B cell (primary cell): ENCODE measurements at regions of chr22 and their contacts with region 1.

Region 1: GRCh38 chr22:40597526-40598430 is 38.7 kb downstream of the MRTFA start:
- DNase-seq: no peak
- ATAC-seq: no peak
- H3K4me3 ChIP-seq: no peak overlapping the region
- H3K4me3 Mint-ChIP-seq: peak overlapping the region; percentile 59
- H3K27ac ChIP-seq: peak overlapping the region in 1 of 2 donors; percentile 34
- H3K27ac Mint-ChIP-seq: no peak overlapping the region
- H3K4me1 ChIP-seq: peaks cover 45 to 48% of the 10 kb centered on the region in 2 donors
- H3K4me1 Mint-ChIP-seq: peaks cover 60% of the 10 kb centered on the region
- H3K27me3 ChIP-seq: no peaks in the 10 kb centered on the region
- H3K27me3 Mint-ChIP-seq: no peaks in the 10 kb centered on the region
- CTCF ChIP-seq: no peak

Region 2: GRCh38 chr22:40533712-40534378 is 63.9 kb before region 1 on chr22:
- CTCF ChIA-PET with region 1: interaction called, 6 read pairs
- POLR2A ChIA-PET with region 1: no interaction called
- intact Hi-C with region 1: loop called (anchors 10 kb)
- DNase-seq: peak; percentile 66
- ATAC-seq: peak; percentile 86
- H3K4me3 ChIP-seq: peak overlapping the region in 3 of 5 experiments; percentile 20 to 25 (median 21)
- H3K4me3 Mint-ChIP-seq: peak overlapping the region; percentile 53
- H3K27ac ChIP-seq: peak overlapping the region in 1 of 2 donors; percentile 72
- H3K27ac Mint-ChIP-seq: peak overlapping the region; percentile 43
- H3K4me1 ChIP-seq: peaks cover 31 to 46% of the 10 kb centered on the region in 2 donors
- H3K4me1 Mint-ChIP-seq: peaks cover 53% of the 10 kb centered on the region
- H3K27me3 ChIP-seq: no peaks in the 10 kb centered on the region
- H3K27me3 Mint-ChIP-seq: no peaks in the 10 kb centered on the region
- CTCF ChIP-seq: no peak

Region 3: DNA sequence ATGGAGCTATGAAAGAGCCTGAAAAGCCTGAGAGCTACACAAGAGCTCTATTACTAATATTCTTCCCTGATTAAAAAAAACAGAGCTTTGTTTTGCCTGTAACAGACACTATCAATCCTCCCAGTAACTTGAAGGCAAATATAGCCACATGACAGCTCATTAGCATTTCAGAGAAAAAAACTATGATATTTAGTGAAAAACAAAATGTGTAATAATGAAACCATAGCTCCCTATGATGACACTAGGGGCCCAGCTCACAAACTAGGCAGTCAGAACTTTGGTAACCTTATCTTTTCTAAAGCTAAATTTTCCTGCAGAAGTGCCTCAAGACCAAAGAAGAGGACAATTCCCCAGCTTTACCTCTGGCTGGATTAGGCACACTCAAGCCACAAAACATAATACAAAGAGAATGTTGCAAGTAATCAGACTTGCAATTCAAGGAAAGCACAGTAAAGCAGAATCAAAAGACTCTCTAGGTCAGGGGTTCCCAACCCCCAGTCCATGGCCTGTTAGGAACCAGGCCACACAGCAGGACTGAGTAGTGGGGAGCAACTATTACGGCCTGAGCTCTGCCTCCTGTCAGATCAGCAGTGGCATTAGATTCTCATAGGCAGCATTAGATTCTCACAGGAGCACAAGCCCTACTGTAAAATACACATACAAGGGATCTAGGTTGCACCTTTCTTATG is 14.6 kb before region 1 on chr22:
- CTCF ChIA-PET with region 1: interaction called, 11 read pairs
- POLR2A ChIA-PET with region 1: no interaction called
- intact Hi-C with region 1: no loop called
- DNase-seq: no peak
- ATAC-seq: no peak
- H3K4me3 ChIP-seq: no peak overlapping the region
- H3K4me3 Mint-ChIP-seq: no peak overlapping the region
- H3K27ac ChIP-seq: no peak overlapping the region
- H3K27ac Mint-ChIP-seq: no peak overlapping the region
- H3K4me1 ChIP-seq: no peaks in the 10 kb centered on the region
- H3K4me1 Mint-ChIP-seq: peaks cover 16% of the 10 kb centered on the region
- H3K27me3 ChIP-seq: no peaks in the 10 kb centered on the region
- H3K27me3 Mint-ChIP-seq: no peaks in the 10 kb centered on the region
- CTCF ChIP-seq: no peak